Thyroid gland (tissue), 4 donors: ENCODE measurements at regions of chr12 and their contacts with region 1.

Region 1: GRCh38 chr12:49644620-49644994 is 21.2 kb downstream of the PRPF40B start:
- DNase-seq: peak; percentile 85 to 88
- H3K4me3 ChIP-seq: no peak overlapping the region
- H3K27ac ChIP-seq: peak overlapping the region in 2 of 3 donors; percentile 44 to 59
- H3K4me1 ChIP-seq: peaks cover 25 to 47% of the 10 kb centered on the region in 2 donors
- H3K27me3 ChIP-seq: no peaks in the 10 kb centered on the region
- CTCF ChIP-seq: peak; percentile 73 to 98 (median 94)
- POLR2A ChIP-seq: no peak

Region 2: GRCh38 chr12:49428793-49429192 is 215.8 kb before region 1 on chr12:
- intact Hi-C with region 1: no loop called
- DNase-seq: no peak
- H3K4me3 ChIP-seq: no peak overlapping the region
- H3K27ac ChIP-seq: no peak overlapping the region
- H3K4me1 ChIP-seq: no peaks in the 10 kb centered on the region
- H3K27me3 ChIP-seq: no peaks in the 10 kb centered on the region
- CTCF ChIP-seq: no peak
- POLR2A ChIP-seq: no peak

Region 3: GRCh38 chr12:49707812-49708147 is 63.2 kb after region 1 on chr12:
- intact Hi-C with region 1: loop called (anchors 2 kb)
- DNase-seq: no peak
- H3K4me3 ChIP-seq: no peak overlapping the region
- H3K27ac ChIP-seq: no peak overlapping the region
- H3K4me1 ChIP-seq: peaks cover 14 to 35% of the 10 kb centered on the region in 2 donors
- H3K27me3 ChIP-seq: no peaks in the 10 kb centered on the region
- CTCF ChIP-seq: peak in 1 of 6 experiments; percentile 32
- POLR2A ChIP-seq: no peak

Region 4: DNA sequence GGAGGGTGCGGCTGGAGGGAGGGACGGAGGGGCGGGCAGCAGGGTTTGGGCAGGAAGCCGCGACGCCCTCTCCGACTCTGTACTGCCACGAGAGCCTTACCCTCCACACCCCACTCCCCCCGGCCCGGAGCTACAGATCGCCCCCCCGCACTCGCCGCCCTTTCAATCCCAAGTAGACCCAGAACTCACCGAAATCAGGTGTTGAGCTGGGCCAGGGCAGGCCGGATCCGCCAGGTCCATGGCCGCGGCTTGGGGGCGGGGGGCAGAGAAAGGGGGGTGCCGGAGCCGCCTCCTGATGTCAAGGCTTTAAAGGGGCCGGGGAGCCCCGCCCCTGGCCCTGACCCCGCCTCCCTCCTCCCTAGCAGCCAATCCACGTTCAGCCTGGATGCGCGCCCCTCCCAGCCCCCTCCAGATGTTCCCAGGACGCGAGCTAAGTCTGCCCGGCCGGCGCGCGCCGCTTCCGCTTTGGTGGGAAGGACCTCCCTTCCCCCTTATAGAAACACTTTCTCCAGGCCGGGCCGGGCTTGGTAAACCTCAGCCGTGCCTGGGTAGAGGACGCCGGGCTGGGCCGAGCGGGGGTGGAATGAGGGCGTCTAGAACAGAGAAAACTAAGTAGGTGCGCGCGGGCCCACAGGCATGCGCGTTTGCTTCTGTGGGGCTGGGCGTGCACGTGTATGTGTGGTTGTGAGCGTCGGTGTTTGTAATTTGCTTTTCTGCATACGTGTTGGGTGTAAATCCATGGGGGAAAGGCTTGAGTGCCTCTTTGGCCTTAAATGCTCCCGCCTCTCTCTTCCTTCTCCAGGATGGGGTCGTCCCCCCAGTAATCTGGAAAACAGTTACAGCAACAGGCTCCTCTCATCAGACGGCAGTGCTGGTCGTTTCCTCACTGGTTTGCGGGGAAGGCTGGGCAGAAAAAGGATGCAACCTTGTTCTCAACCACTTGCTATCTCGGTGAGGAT is 183.8 kb after region 1 on chr12 and contains the start of gene NCKAP5L:
- intact Hi-C with region 1: loop called (anchors 10 kb)
- DNase-seq: peak; percentile 98
- H3K4me3 ChIP-seq: peak within 1 kb of the TSS; percentile 67 to 93 (median 87)
- H3K27ac ChIP-seq: peak within 1 kb of the TSS; percentile 64 to 85 (median 75)
- H3K4me1 ChIP-seq: peaks cover 13 to 35% of the 10 kb centered on the region in 2 donors
- H3K27me3 ChIP-seq: no peaks in the 10 kb centered on the region
- CTCF ChIP-seq: no peak
- POLR2A ChIP-seq: peak in 1 of 2 donors; percentile 69
- total RNA-seq, gene NCKAP5L: 14.1 to 33.7 (median 16.3) TPM